HepG2 (cell line): ENCODE measurements at regions of chr17 and their contacts with region 1.

Region 1: GRCh38 chr17:40113110-40113906 is 8.5 kb upstream of the MSL1 start:
- DNase-seq: peak; percentile 98
- ATAC-seq: peak; percentile 67
- H3K4me3 ChIP-seq: peak overlapping the region; percentile 25 to 67 (median 39)
- H3K27ac ChIP-seq: peak overlapping the region; percentile 95
- H3K4me1 ChIP-seq: peaks cover 89% of the 10 kb centered on the region
- H3K27me3 ChIP-seq: no peaks in the 10 kb centered on the region
- CTCF ChIP-seq: peak; percentile 98
- EP300 ChIP-seq: peak; percentile 54 to 76; a peak in 3 of 4 replicates
- POLR2A ChIP-seq: peak; percentile 74 to 93; a peak in 3 of 4 replicates
- RAD21 ChIP-seq: peak; percentile 90

Region 2: GRCh38 chr17:39863918-39864746 is 249.2 kb before region 1 on chr17 and contains the start of gene IKZF3:
- CTCF ChIA-PET with region 1: no interaction called
- POLR2A ChIA-PET with region 1: no interaction called
- in situ Hi-C with region 1: no loop called
- intact Hi-C with region 1: no loop called
- DNase-seq: peak; percentile 46
- ATAC-seq: peak; percentile 98
- H3K4me3 ChIP-seq: no peak within 1 kb of the TSS; a peak in 1 of 6 replicates
- H3K27ac ChIP-seq: no peak within 1 kb of the TSS
- H3K4me1 ChIP-seq: peaks cover 5% of the 10 kb centered on the region
- H3K27me3 ChIP-seq: peaks cover 6 to 55% of the 10 kb centered on the region in 2 experiments
- CTCF ChIP-seq: peak; percentile 83
- EP300 ChIP-seq: 0 out of 4 replicates have a peak, but pooled peaks of 1 of the 2 experiments have one; percentile 10
- POLR2A ChIP-seq: no peak
- RAD21 ChIP-seq: peak; percentile 89
- total RNA-seq, gene IKZF3: not detected in 2 replicates

Region 3: DNA sequence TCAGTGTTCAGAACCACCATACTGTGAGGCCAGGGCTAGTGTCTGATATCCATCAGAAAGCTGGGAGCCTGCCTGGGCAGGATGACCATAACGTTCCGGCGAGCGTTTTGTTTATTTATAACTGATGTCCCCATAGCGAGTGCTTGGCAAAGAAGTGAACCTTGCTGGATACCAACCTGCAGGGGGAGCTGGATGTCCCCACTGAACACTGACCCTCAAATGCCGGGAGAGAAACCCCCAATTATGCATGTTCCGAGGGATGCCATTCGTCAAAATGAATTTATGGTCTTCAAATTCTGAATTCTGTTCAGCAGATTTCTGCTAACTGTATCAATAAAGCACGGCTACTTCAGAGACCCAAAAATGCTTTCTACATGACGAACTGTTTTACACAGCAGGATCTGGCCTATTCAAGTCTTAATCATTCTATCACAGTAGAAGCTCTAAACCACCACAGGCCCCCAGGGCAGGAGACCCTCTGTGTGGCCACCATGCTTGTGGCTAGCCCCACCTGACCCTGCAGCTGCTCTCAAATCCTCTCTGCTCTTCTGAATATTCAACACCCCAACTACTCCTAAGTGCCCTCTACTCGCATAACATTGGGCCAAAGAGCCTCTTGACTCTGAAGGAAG is 74.3 kb before region 1 on chr17:
- CTCF ChIA-PET with region 1: no interaction called
- POLR2A ChIA-PET with region 1: interaction called, 16 read pairs
- in situ Hi-C with region 1: no loop called
- intact Hi-C with region 1: no loop called
- DNase-seq: peak; percentile 79
- ATAC-seq: peak; percentile 92
- H3K4me3 ChIP-seq: no peak overlapping the region
- H3K27ac ChIP-seq: peak overlapping the region; percentile 25
- H3K4me1 ChIP-seq: peaks cover 12% of the 10 kb centered on the region
- H3K27me3 ChIP-seq: no peaks in the 10 kb centered on the region
- CTCF ChIP-seq: peak; percentile 81
- EP300 ChIP-seq: no peak
- POLR2A ChIP-seq: no peak
- RAD21 ChIP-seq: peak; percentile 67

Region 4: GRCh38 chr17:40075201-40075941 is 37.9 kb before region 1 on chr17:
- CTCF ChIA-PET with region 1: interaction called, 4 read pairs
- POLR2A ChIA-PET with region 1: interaction called, 33 read pairs
- in situ Hi-C with region 1: no loop called
- intact Hi-C with region 1: no loop called
- DNase-seq: peak; percentile 71
- ATAC-seq: peak; percentile 76
- H3K4me3 ChIP-seq: no peak overlapping the region
- H3K27ac ChIP-seq: peak overlapping the region; percentile 16
- H3K4me1 ChIP-seq: peaks cover 49% of the 10 kb centered on the region
- H3K27me3 ChIP-seq: no peaks in the 10 kb centered on the region
- CTCF ChIP-seq: peak; percentile 97
- EP300 ChIP-seq: peak in 1 of 2 experiments; percentile 69; a peak in 1 of 4 replicates
- POLR2A ChIP-seq: no peak
- RAD21 ChIP-seq: peak; percentile 76

Region 5: GRCh38 chr17:40098846-40099618 is 14.3 kb before region 1 on chr17:
- CTCF ChIA-PET with region 1: interaction called, 4 read pairs
- POLR2A ChIA-PET with region 1: interaction called, 568 read pairs
- in situ Hi-C with region 1: no loop called
- intact Hi-C with region 1: loop called (anchors 1 kb)
- DNase-seq: peak; percentile 99
- ATAC-seq: peak; percentile 60
- H3K4me3 ChIP-seq: peak overlapping the region; percentile 72 to 86 (median 79)
- H3K27ac ChIP-seq: peak overlapping the region; percentile 95
- H3K4me1 ChIP-seq: peaks cover 67% of the 10 kb centered on the region
- H3K27me3 ChIP-seq: no peaks in the 10 kb centered on the region; a peak in 1 of 5 replicates
- CTCF ChIP-seq: 0 out of 2 replicates have a peak, but pooled peaks have one; percentile 13
- EP300 ChIP-seq: peak; percentile 45 to 74; a peak in 3 of 4 replicates
- POLR2A ChIP-seq: peak; percentile 71 to 82
- RAD21 ChIP-seq: no peak; the same call in none of the 2 replicates

Region 6: DNA sequence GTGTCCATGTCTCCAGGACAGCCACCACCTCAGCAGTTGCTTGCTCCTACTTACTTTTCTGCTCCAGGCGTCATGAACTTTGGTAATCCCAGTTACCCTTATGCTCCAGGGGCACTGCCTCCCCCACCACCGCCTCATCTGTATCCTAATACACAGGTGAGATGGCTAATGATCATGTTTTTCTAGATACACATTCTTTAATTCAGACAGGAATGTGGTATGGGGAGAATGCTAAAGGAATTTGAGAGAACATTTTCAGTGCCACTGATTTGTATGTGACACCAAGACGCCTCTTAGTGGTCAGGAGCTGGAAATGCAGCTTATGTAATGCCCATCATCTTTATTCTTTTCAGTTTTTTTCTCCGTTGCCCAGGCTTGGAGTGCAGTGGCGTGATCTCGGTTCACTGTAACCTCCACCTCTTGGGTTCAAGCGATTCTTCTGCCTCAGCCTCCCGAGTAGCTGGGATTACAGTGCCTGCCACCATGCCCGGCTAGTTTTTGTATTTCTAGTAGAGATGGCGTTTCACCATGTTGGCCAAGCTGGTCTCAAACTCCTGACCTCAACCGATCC is 55.0 kb after region 1 on chr17:
- CTCF ChIA-PET with region 1: interaction called, 31 read pairs
- POLR2A ChIA-PET with region 1: interaction called, 33 read pairs
- in situ Hi-C with region 1: loop called (anchors 5 kb)
- intact Hi-C with region 1: loop called (anchors 1 kb)
- DNase-seq: peak; percentile 77
- ATAC-seq: peak; percentile 69
- H3K4me3 ChIP-seq: no peak overlapping the region
- H3K27ac ChIP-seq: peak overlapping the region; percentile 16
- H3K4me1 ChIP-seq: peaks cover 26% of the 10 kb centered on the region
- H3K27me3 ChIP-seq: no peaks in the 10 kb centered on the region
- CTCF ChIP-seq: peak; percentile 89
- EP300 ChIP-seq: no peak
- POLR2A ChIP-seq: no peak
- RAD21 ChIP-seq: peak; percentile 82; the same call in 1 of the 2 replicates